Heart left ventricle (tissue), 16 donors: ENCODE measurements at regions of chr7 and their contacts with region 1.

Region 1: GRCh38 chr7:32062150-32062549 is 8.1 kb downstream of the PDE1C start:
- DNase-seq: peak in 4 of 5 donors; percentile 29 to 71 (median 52)
- ATAC-seq: no peak
- H3K4me3 ChIP-seq: no peak overlapping the region
- H3K27ac ChIP-seq: peak overlapping the region in 1 of 12 donors; percentile 2
- H3K4me1 ChIP-seq: peaks cover 2 to 85% (median 33%) of the 10 kb centered on the region in 12 donors
- H3K27me3 ChIP-seq: no peaks in the 10 kb centered on the region
- CTCF ChIP-seq: peak in 11 of 12 donors; percentile 11 to 58 (median 30)
- POLR2A ChIP-seq: no peak

Region 2: DNA sequence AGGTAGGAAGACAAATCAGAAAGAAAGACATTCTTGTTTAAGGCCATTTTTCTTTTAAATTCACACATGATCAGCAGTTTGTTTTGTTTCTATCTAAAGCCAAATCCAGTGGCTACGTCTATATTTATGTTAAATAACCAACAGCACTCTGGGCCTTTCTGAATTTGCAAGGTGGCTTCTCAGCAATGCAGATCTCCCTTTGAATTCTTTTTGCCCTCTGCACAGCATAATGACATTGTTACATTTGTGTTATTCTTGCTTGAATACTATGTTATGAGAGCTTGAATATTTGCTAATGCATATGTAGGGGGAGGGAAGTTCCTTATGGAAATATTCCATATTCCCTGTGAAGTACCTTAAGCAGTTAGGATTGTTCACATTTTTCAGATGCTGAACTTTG is 448.5 kb before region 1 on chr7:
- intact Hi-C with region 1: no loop called
- DNase-seq: no peak
- ATAC-seq: no peak
- H3K4me3 ChIP-seq: no peak overlapping the region
- H3K27ac ChIP-seq: no peak overlapping the region
- H3K4me1 ChIP-seq: no peaks in the 10 kb centered on the region
- H3K27me3 ChIP-seq: no peaks in the 10 kb centered on the region
- CTCF ChIP-seq: no peak
- POLR2A ChIP-seq: no peak

Region 3: GRCh38 chr7:31875424-31875823 is 186.7 kb before region 1 on chr7:
- intact Hi-C with region 1: loop called in 3 of 10 experiments (anchors 5 to 10 kb)
- DNase-seq: peak in 2 of 5 donors; percentile 36 to 46
- ATAC-seq: peak; percentile 29 to 79 (median 74)
- H3K4me3 ChIP-seq: no peak overlapping the region
- H3K27ac ChIP-seq: peak overlapping the region in 11 of 12 donors; percentile 9 to 82 (median 62)
- H3K4me1 ChIP-seq: peaks cover 5 to 28% (median 18%) of the 10 kb centered on the region in 12 donors
- H3K27me3 ChIP-seq: no peaks in the 10 kb centered on the region
- CTCF ChIP-seq: no peak
- POLR2A ChIP-seq: no peak

Region 4: GRCh38 chr7:31883761-31884164 is 178.4 kb before region 1 on chr7:
- intact Hi-C with region 1: loop called in 3 of 10 experiments (anchors 5 to 10 kb)
- DNase-seq: peak in 2 of 5 donors; percentile 37
- ATAC-seq: peak; percentile 19 to 69 (median 59)
- H3K4me3 ChIP-seq: no peak overlapping the region
- H3K27ac ChIP-seq: peak overlapping the region; percentile 67 to 87 (median 82)
- H3K4me1 ChIP-seq: peaks cover 12 to 59% (median 27%) of the 10 kb centered on the region in 12 donors
- H3K27me3 ChIP-seq: no peaks in the 10 kb centered on the region
- CTCF ChIP-seq: no peak
- POLR2A ChIP-seq: no peak

Region 5: GRCh38 chr7:31986944-31987430 is 75.2 kb before region 1 on chr7:
- intact Hi-C with region 1: loop called in 1 of 10 experiments (anchors 10 kb)
- DNase-seq: no peak
- ATAC-seq: no peak
- H3K4me3 ChIP-seq: no peak overlapping the region
- H3K27ac ChIP-seq: peak overlapping the region in 1 of 12 donors; percentile 9
- H3K4me1 ChIP-seq: peaks cover 0 to 51% (median 8%) of the 10 kb centered on the region in 12 donors
- H3K27me3 ChIP-seq: no peaks in the 10 kb centered on the region
- CTCF ChIP-seq: no peak
- POLR2A ChIP-seq: no peak